Thyroid gland (tissue), 4 donors: ENCODE measurements at regions of chr7 and their contacts with region 1.

Region 1: GRCh38 chr7:31122649-31123058 is 70.5 kb downstream of the ADCYAP1R1 start:
- DNase-seq: peak; percentile 55 to 61
- H3K4me3 ChIP-seq: no peak overlapping the region
- H3K27ac ChIP-seq: no peak overlapping the region
- H3K4me1 ChIP-seq: no peaks in the 10 kb centered on the region
- H3K27me3 ChIP-seq: no peaks in the 10 kb centered on the region
- CTCF ChIP-seq: peak; percentile 40 to 88 (median 76)
- POLR2A ChIP-seq: no peak

Region 2: DNA sequence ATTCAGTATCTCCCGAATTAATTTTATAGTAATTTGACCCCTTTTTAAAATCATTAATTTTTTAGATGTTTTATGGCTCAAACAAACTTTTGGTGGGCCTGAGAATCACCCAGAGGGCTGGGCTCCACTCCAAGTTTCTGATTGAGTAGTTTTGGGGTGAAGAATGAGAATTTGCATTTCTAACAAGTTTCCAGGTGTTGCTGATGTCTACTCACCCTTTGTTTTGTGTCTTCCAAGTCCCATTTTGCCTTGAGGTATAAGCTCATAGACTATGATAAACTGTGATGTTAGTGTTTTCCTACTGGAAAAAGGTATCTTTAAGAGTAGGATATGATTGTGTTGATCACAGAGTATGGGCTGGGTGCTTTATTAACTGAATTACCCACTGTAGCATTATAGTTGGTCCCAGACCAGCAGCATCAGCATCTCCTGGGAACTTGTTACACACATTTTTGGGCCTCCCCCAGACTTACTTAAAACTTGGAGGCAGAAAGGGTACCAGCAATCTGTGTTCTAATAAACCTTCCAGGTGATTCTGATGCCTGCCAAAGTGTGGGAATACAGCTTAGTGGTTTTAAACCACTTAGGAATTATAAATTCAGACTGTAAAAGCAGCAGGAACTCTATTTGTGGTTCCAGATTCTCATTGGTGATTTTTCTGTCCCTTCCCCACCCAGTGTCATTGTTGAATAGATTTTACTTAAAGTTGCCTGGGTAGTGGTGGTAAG is 819.2 kb before region 1 on chr7:
- intact Hi-C with region 1: no loop called
- DNase-seq: no peak
- H3K4me3 ChIP-seq: no peak overlapping the region
- H3K27ac ChIP-seq: no peak overlapping the region
- H3K4me1 ChIP-seq: peaks cover 8 to 13% of the 10 kb centered on the region in 2 donors
- H3K27me3 ChIP-seq: no peaks in the 10 kb centered on the region
- CTCF ChIP-seq: no peak
- POLR2A ChIP-seq: no peak

Region 3: DNA sequence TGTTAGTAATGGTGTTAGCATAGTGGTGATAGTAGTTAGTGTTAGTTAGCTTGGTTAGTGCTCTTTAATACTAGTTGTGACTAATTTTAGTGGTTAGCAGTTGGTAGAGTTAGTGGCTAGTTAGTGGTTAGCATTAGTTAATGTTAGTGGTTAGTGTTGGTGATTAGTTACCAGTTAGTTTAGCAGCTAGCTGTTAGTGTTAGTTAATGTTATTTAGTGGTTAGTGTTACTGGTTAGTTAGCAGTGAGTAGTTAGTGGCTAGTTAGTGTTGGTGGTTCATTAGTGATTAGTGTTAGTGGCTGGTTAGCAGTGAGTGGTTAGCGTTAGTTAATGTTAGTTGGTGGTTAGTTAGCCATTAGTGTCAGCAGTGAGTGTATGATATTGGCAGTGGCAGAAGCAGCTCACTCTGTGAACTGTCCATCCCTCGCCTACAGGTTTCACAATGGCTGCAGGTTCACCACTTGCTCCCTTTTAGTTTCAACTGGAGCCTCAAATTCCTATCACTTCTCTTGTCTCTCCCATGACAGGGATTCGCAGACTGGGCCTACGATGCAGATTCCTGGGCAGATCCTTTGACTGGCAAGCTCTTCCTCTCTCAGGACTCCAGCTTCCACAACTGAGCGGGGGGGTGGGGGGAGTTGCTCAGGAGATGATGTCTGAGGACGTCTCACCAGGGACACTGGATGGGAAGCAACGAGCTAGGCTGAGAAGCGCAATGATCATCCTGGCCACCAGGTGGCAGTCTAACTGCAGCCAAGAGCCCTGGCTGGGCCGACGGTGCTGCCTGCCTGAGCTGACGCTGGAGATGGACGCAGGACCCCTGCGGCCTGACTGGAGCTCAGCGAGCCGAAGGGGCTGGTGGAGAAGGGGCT is 139.4 kb before region 1 on chr7:
- intact Hi-C with region 1: loop called (anchors 5 kb)
- DNase-seq: peak; percentile 77 to 81
- H3K4me3 ChIP-seq: no peak overlapping the region
- H3K27ac ChIP-seq: no peak overlapping the region
- H3K4me1 ChIP-seq: peaks cover 0 to 13% of the 10 kb centered on the region in 2 donors
- H3K27me3 ChIP-seq: no peaks in the 10 kb centered on the region
- CTCF ChIP-seq: peak; percentile 67 to 94 (median 80)
- POLR2A ChIP-seq: no peak